T-cell (primary cell): ENCODE measurements at regions of chr9 and their contacts with region 1.

Region 1: GRCh38 chr9:129615705-129616285 is 5.1 kb downstream of the C9orf50 start:
- DNase-seq: no peak
- ATAC-seq: no peak
- H3K4me3 ChIP-seq: no peak overlapping the region
- H3K4me3 Mint-ChIP-seq: no peak overlapping the region
- H3K27ac ChIP-seq: no peak overlapping the region
- H3K27ac Mint-ChIP-seq: no peak overlapping the region
- H3K4me1 ChIP-seq: peaks cover 4 to 17% of the 10 kb centered on the region in 2 experiments
- H3K4me1 Mint-ChIP-seq: peaks cover 5 to 12% (median 8%) of the 10 kb centered on the region in 3 donors
- H3K27me3 ChIP-seq: peaks cover 0 to 57% of the 10 kb centered on the region in 2 experiments
- H3K27me3 Mint-ChIP-seq: peaks cover 4 to 12% of the 10 kb centered on the region in 2 donors

Region 2: DNA sequence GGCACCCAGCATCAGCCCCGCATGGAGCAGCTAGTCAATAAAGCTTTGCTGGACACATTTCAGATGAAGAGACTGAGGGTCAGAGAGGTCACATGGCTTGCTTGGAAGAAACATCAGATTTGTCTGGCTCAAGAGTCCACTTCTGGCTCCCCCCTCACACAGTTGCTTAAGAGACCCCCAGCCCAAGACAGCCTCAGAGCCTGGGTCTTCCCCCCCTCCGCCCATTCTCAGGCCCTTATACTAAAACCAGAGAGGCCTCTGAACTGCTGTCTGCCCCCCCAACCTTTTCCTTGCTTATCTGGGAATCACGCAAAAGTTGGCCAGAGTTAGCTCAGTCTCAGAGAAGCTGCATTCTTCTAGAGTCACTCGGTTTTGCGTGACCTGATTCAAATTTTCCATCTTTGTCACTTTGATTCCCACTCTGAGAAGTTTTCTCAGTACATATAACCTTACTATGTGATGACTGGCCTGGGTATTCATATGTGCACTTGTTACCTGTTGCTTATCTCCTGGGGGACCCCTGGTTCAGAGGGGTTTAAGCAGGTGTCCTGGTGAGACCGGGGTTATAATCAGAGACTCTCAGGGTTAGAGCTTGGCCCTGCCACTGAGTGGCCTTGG is 292.3 kb before region 1 on chr9:
- CTCF ChIA-PET with region 1: interaction called in 1 of 2 experiments, 10 read pairs
- POLR2A ChIA-PET with region 1: no interaction called
- DNase-seq: no peak
- ATAC-seq: no peak
- H3K4me3 ChIP-seq: no peak overlapping the region
- H3K4me3 Mint-ChIP-seq: no peak overlapping the region
- H3K27ac ChIP-seq: no peak overlapping the region
- H3K27ac Mint-ChIP-seq: no peak overlapping the region
- H3K4me1 ChIP-seq: peaks cover 13 to 32% of the 10 kb centered on the region in 2 experiments
- H3K4me1 Mint-ChIP-seq: peaks cover 19 to 24% (median 21%) of the 10 kb centered on the region in 3 donors
- H3K27me3 ChIP-seq: peaks cover 0 to 16% of the 10 kb centered on the region in 2 experiments
- H3K27me3 Mint-ChIP-seq: no peaks in the 10 kb centered on the region

Region 3: GRCh38 chr9:129460323-129461261 is 155.2 kb before region 1 on chr9:
- CTCF ChIA-PET with region 1: no interaction called
- POLR2A ChIA-PET with region 1: no interaction called
- DNase-seq: peak; percentile 56 to 91 (median 72)
- ATAC-seq: peak; percentile 78 to 86 (median 82)
- H3K4me3 ChIP-seq: peak overlapping the region; percentile 39 to 53
- H3K4me3 Mint-ChIP-seq: peak overlapping the region; percentile 66 to 81 (median 70)
- H3K27ac ChIP-seq: peak overlapping the region; percentile 99
- H3K27ac Mint-ChIP-seq: peak overlapping the region; percentile 89 to 91
- H3K4me1 ChIP-seq: peaks cover 16 to 54% of the 10 kb centered on the region in 2 experiments
- H3K4me1 Mint-ChIP-seq: peaks cover 27 to 52% (median 46%) of the 10 kb centered on the region in 3 donors
- H3K27me3 ChIP-seq: no peaks in the 10 kb centered on the region
- H3K27me3 Mint-ChIP-seq: no peaks in the 10 kb centered on the region

Region 4: DNA sequence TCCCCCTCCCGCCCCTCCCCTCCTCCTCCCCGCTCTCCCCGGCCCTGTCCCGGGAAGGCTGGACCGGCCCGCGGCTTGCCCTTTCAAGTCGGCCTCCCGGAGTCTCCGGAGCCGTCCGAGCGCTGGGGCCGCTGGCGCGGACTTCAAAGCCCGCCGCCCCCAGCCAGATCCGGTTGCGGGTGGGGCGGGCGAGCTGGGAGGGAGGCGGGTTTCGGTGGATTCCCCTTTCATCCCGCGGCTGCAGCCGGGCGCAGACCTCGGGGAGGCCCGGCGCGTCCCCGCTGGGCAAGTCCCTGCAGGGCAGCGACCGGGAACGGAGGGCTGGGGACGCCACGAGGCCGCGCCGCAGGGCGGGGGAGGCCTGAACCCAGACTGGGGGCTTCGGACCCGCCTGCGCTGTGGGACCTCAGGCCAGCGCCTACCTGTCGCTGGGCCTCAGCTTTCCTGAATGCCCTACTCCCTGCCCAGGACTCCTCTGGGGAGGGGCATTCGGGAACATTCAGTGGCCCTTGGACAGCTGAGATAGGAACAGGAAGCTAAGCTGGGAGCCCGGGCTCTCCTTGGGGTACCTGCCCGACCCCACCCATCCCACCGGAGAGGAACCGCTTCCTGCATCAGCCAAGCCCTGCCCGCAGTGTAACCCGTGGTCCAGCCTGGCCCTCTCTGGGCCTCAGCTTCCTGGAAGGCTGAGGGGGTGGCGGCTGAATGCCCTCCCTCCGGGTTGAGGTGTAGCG is 18.3 kb before region 1 on chr9:
- CTCF ChIA-PET with region 1: no interaction called
- POLR2A ChIA-PET with region 1: no interaction called
- DNase-seq: peak in 3 of 35 experiments; percentile 33 to 65 (median 34)
- ATAC-seq: peak; percentile 59 to 76 (median 74)
- H3K4me3 ChIP-seq: peak overlapping the region; percentile 41 to 58
- H3K4me3 Mint-ChIP-seq: peak overlapping the region; percentile 51 to 68 (median 53)
- H3K27ac ChIP-seq: no peak overlapping the region
- H3K27ac Mint-ChIP-seq: peak overlapping the region in 1 of 2 donors; percentile 74
- H3K4me1 ChIP-seq: peaks cover 0 to 31% of the 10 kb centered on the region in 2 experiments
- H3K4me1 Mint-ChIP-seq: peaks cover 16 to 36% (median 25%) of the 10 kb centered on the region in 3 donors
- H3K27me3 ChIP-seq: peaks cover 0 to 31% of the 10 kb centered on the region in 2 experiments
- H3K27me3 Mint-ChIP-seq: peaks cover 3 to 10% of the 10 kb centered on the region in 2 donors